GM10248 (cell line): ENCODE measurements at regions of chr9 and their contacts with region 1.

Region 1: GRCh38 chr9:85009251-85009650 is 339.7 kb downstream of the NTRK2 start:
- DNase-seq: no peak
- CTCF ChIP-seq: no peak

Region 2: GRCh38 chr9:84975926-84976325 is 33.3 kb before region 1 on chr9:
- CTCF ChIA-PET with region 1: no interaction called
- POLR2A ChIA-PET with region 1: no interaction called
- DNase-seq: no peak
- CTCF ChIP-seq: no peak

Region 3: DNA sequence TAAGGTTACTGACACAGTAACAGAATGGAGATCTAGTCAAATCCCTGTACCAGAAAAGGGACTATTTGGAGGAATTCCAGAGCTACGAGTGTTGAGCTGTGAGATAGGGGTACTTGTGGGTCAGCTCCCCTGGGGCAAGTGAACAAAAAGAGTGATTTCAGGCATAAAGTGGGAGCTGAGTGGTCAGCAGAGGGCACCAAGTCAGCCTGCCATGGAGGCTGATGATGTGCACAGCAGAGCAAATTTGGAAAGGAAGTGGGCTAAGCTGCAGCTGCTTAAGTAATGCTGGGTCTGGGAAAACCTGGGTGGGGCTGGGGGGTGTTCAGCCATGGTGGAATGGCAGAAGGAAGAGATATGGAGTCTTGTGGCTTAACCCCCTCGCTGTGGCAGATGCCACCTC is 11.8 kb before region 1 on chr9:
- CTCF ChIA-PET with region 1: interaction called, 22 read pairs
- POLR2A ChIA-PET with region 1: no interaction called
- DNase-seq: no peak
- CTCF ChIP-seq: peak; percentile 35

Region 4: DNA sequence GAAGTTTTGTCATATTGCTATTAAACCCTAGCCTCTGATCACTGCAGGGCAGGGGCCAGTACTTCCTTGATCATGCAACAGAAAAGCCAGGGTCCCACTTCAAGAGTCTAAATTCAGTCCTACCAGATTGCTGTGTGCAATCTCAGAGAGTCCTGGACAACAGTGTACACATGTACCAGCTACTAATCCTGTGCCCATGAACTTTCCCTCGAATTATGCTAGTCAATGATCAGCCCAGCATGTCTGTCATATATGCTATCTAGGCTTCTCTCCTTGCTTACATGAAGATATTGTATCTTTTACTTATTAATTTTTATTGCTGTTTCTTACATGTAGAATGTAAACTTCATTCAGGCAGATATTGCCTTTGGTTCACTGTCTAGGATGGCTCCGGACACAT is 27.2 kb after region 1 on chr9:
- CTCF ChIA-PET with region 1: no interaction called
- POLR2A ChIA-PET with region 1: no interaction called
- DNase-seq: no peak
- CTCF ChIP-seq: no peak

Region 5: GRCh38 chr9:85155352-85155751 is 146.1 kb after region 1 on chr9:
- CTCF ChIA-PET with region 1: no interaction called
- POLR2A ChIA-PET with region 1: no interaction called
- DNase-seq: no peak
- CTCF ChIP-seq: no peak